ENCODE measurements at regions of chr20 and their contacts with region 1.

Region 1: DNA sequence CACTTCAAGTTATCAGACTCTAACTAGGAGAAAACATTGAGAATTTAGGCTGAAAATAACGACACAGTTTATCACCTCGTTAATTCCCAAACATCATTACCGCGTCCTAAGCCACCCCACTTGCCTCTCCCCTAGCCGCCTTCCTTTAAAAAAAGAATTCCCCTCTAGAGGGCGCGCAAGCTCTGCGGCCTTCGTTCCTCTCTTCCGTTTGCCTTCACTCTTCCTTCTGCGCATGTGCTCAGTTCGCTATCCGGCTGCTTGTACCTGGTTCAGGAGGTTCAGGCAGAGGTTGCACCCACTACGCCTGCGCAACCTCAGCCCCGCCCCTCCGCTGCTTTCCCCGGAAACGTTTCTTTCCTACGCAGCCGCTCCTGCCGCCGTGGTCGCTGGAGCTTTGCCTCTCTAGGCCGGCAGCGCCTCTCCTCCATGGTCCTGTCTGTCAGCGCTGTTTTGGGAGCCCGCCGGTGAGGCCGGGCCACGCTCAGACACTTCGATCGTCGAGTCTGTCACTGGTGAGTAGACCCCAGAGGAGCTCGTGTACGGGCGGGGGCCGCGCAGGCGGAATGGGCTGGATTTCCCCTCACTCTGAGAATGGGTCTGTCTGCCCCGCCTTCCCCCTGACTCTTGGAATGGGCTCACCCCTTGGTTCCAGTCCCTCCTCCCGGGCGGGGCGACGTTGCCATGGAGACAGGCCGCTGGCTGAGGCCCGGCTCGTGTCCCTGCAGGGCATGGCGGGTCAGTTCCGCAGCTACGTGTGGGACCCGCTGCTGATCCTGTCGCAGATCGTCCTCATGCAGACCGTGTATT is at the start of gene SYS1:
- DNase-seq: peak in 1 of 2 donors; percentile 99
- H3K4me3 ChIP-seq: peak within 1 kb of the TSS; percentile 68 to 70
- H3K27ac ChIP-seq: peak within 1 kb of the TSS; percentile 89
- H3K4me1 ChIP-seq: peaks cover 47% of the 10 kb centered on the region
- H3K27me3 ChIP-seq: no peaks in the 10 kb centered on the region
- CTCF ChIP-seq: peak; percentile 85 to 95 (median 86)
- POLR2A ChIP-seq: peak in 1 of 2 donors; percentile 70
- total RNA-seq, gene SYS1: 44.9 TPM

Region 2: GRCh38 chr20:45445805-45446562 is 83.0 kb after region 1 on chr20:
- intact Hi-C with region 1: loop called (anchors 5 kb)
- DNase-seq: no peak
- H3K4me3 ChIP-seq: no peak overlapping the region
- H3K27ac ChIP-seq: no peak overlapping the region
- H3K4me1 ChIP-seq: peaks cover 7% of the 10 kb centered on the region
- H3K27me3 ChIP-seq: no peaks in the 10 kb centered on the region
- CTCF ChIP-seq: no peak
- POLR2A ChIP-seq: no peak